AG04450 (cell line): ENCODE measurements at regions of chr11 and their contacts with region 1.

Region 1: DNA sequence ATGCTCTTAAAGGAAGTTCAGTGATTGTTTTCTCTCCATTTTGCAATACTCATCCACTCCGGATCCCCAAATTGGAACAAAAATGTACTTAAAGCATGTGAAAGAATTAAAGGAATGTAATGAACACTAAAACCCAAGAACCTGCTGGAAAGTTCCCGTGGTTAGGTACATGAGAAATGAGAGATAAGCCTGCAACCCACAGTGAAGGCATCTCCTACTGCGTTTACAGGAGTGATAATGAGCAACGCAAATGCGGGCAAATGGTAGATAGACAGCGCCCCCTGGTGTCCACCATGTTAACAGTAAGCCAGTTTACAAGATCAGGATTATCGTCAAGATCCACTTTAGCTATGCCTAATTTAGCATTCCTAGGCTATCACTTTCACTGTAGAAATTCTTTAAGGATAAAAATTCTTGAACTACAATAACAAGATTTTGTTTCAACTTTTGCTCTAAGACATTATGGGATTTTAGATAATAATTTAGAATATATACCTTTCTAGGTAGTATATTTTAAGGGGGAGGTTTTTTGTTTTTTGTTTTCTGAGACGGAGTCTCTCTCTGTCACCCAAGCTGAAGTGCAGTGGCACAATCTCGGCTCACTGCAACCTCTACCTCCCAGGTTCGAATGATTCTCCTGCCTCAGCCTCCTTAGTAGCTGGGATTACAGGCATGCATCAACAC is 29.9 kb downstream of the ALG9 start:
- DNase-seq: peak; percentile 72
- H3K4me3 ChIP-seq: no peak overlapping the region
- H3K27ac ChIP-seq: no peak overlapping the region
- H3K27me3 ChIP-seq: no peaks in the 10 kb centered on the region
- CTCF ChIP-seq: peak; percentile 89

Region 2: DNA sequence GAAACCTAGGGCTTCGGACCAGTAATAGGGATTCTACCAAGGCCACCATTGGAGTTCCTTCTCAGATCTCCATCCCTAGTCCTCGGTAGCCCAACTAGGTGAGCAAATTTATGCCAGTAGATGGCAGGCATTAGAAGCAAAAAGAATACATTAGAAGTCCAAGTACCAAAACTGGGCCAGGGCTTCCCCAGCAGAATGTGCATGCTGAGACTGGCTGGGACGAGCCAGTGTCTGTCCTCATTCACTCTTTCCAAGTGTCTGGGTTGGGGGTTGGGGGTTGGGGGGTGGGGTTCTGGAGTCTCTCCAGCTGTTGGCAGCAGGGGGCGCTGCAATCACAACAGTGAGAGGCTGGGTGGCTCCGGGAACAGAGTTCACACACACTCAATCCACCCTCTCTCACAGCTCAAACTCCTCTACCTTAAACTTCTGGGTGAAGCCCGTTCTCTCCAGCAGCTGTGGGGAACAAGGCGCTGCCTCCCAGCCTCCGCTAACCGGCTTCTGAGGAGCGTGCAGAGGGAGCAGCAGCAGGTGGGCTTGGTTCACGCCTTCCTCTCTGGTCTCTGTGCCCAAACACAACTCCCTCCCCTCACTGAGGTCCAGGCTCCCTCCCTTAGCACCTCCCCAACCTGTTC is 386.8 kb before region 1 on chr11:
- CTCF ChIA-PET with region 1: interaction called, 15 read pairs
- POLR2A ChIA-PET with region 1: no interaction called
- DNase-seq: peak; percentile 38
- H3K4me3 ChIP-seq: no peak overlapping the region
- H3K27ac ChIP-seq: no peak overlapping the region
- H3K27me3 ChIP-seq: peaks cover 3% of the 10 kb centered on the region
- CTCF ChIP-seq: peak; percentile 57; the same call in 1 of the 2 replicates

Region 3: DNA sequence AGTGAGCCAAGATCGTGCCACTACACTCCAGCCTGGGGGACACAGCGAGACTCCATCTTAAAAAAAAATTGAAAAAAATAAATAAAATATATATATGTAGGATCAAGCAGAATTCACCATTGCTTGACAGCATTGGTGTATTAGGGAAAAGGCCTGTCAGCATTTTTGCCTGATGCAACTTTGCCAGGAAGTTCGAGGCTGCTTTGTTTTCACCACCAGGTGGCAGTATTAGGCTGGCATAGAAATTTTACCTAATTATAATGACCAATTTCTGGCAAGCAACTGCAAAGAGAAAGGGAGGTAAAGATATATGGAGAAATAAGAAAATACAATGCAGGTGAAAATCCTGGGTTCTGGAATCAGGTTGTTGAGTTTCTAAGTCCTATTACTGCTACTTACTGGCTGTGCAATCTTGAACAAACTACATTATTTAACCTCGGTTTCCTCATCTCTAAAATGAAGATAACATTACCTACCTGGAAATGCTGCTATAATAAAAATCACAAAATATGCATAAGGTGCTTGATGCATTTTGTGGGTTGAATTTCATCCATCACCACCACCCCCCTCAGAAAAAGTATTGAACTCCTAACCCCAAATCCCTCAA is 276.3 kb before region 1 on chr11:
- CTCF ChIA-PET with region 1: interaction called, 16 read pairs
- POLR2A ChIA-PET with region 1: no interaction called
- DNase-seq: no peak
- H3K4me3 ChIP-seq: no peak overlapping the region
- H3K27ac ChIP-seq: no peak overlapping the region
- H3K27me3 ChIP-seq: no peaks in the 10 kb centered on the region
- CTCF ChIP-seq: peak; percentile 88

Region 4: GRCh38 chr11:111586388-111586831 is 255.1 kb before region 1 on chr11:
- CTCF ChIA-PET with region 1: interaction called, 12 read pairs
- POLR2A ChIA-PET with region 1: no interaction called
- DNase-seq: no peak
- H3K4me3 ChIP-seq: no peak overlapping the region
- H3K27ac ChIP-seq: no peak overlapping the region
- H3K27me3 ChIP-seq: no peaks in the 10 kb centered on the region
- CTCF ChIP-seq: peak; percentile 65

Region 5: DNA sequence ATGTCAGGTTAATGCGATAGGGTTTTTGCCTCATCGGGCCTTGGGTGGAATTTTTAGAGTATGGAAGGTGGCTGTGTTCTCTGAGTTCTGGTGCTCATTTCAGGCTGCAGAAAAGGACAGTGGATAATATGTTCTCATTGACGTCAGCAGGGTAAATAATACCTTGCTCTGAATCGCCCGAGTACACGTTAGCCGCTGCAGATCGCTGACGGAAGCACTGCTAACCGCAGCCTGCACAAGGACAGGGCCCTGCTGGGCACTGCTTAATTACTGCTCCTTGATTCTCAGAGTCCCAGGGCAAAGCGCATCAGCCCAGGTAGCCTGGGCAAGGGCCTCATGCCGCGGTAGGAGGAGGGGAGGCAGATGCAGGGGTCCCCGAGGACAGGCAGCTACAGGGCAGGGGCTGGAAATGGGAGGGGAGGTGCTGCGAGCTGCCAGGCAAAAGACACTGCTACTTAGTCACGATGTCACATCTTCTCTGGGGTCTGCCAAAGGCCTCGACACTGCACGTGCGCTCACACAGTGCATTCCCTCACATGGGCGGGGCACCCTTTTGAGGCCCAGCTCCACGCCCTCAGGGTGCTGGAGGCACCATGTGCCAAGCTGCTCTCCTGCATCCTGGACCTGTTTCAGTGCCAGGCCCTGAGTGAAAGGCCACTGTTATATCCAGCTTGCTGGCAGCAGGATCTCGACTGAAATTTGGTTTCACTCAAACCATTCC is 110.5 kb before region 1 on chr11:
- CTCF ChIA-PET with region 1: interaction called, 11 read pairs
- POLR2A ChIA-PET with region 1: no interaction called
- DNase-seq: no peak
- H3K4me3 ChIP-seq: no peak overlapping the region
- H3K27ac ChIP-seq: no peak overlapping the region
- H3K27me3 ChIP-seq: no peaks in the 10 kb centered on the region
- CTCF ChIP-seq: no peak